ENCODE measurements at regions of chr5 and their contacts with region 1.

Region 1: DNA sequence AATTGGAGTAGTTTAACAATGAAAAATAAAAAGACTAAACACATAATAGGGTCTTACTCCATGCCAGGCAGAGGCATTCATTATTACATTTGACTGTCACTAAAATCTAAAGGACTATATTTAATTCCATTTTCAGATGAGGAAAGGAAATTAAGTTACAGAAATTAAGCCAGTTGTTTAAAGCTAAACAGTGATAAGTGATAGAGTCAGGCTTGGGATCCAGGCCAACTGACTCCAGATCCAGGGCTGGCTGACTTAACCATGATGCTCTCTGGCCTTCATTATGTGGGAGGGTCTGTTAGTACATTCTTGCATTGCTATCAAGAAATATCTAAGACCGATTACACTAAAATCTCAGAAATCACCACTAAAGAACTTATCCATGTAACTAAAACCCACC is 107.2 kb downstream of the ARHGEF28 start:
- DNase-seq: no peak
- H3K4me3 ChIP-seq: no peak overlapping the region
- H3K27ac ChIP-seq: no peak overlapping the region
- H3K4me1 ChIP-seq: no peaks in the 10 kb centered on the region
- H3K27me3 ChIP-seq: no peaks in the 10 kb centered on the region
- CTCF ChIP-seq: no peak
- EP300 ChIP-seq: no peak
- POLR2A ChIP-seq: no peak

Region 2: DNA sequence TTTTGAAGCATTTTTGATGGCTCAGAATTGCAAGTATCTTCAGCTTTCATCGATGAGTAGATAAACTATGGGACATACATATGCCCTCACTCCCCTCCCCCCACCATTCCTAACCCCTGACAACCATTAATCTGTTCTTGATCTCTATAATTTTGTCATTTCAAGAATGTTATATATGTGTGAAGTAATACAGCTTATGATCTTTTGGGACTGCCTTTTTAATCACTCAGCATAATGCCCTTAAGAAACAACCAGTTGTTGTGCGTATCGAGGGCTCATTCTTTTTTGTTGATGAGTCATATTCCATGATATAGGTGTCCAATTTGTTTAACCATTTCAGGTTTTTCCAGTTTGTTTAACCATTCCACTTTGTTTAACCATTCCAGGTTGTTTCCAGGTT is 31.7 kb before region 1 on chr5:
- in situ Hi-C with region 1: no loop called
- intact Hi-C with region 1: loop called (anchors 2 kb)
- DNase-seq: no peak
- H3K4me3 ChIP-seq: no peak overlapping the region
- H3K27ac ChIP-seq: no peak overlapping the region
- H3K4me1 ChIP-seq: no peaks in the 10 kb centered on the region
- H3K27me3 ChIP-seq: no peaks in the 10 kb centered on the region
- CTCF ChIP-seq: no peak
- EP300 ChIP-seq: no peak
- POLR2A ChIP-seq: no peak

Region 3: GRCh38 chr5:73719632-73720031 is 13.6 kb before region 1 on chr5:
- in situ Hi-C with region 1: no loop called
- intact Hi-C with region 1: no loop called
- DNase-seq: no peak
- H3K4me3 ChIP-seq: no peak overlapping the region
- H3K27ac ChIP-seq: no peak overlapping the region
- H3K4me1 ChIP-seq: no peaks in the 10 kb centered on the region
- H3K27me3 ChIP-seq: no peaks in the 10 kb centered on the region
- CTCF ChIP-seq: no peak
- EP300 ChIP-seq: no peak
- POLR2A ChIP-seq: no peak

Region 4: DNA sequence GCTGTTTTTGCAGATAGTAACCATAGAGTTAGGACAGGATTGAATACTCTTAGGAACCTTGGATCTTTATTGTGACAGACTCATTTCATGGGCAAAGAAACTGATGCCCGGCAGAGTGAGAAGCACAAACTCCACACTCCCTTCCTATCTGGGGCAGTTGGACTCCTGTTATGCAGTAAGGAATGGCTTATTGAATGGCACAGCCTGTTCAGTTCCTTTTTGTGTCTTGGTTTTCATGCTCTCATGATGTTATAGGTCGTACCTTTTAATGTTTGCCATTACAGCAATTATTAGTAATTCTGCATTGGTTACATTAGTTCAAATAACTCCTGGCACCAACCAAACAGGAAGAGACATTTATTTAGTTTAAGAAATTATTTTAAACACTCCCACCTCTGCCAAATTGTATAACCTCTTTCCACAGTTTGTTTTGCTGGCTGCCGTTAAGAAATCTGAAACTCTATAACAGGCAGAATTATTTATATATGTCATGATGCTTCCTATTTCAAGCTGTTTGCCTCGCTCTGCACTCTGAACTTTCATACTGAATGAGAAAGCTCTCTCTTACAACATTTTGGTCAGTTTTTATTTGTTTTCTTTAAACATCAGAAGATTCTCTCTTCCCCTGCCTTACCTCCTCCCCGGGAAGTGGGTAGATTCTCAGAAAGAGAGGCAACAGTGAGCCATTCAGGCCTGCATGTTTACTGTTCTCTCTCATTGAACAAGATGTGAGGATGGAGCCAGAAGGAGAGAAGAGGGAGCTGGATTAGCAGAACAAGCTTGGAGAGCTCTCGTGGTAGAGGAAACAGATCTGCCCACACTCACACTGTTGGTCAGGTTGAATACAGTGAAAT is 37.2 kb after region 1 on chr5:
- in situ Hi-C with region 1: no loop called
- intact Hi-C with region 1: no loop called
- DNase-seq: no peak
- H3K4me3 ChIP-seq: no peak overlapping the region
- H3K27ac ChIP-seq: no peak overlapping the region
- H3K4me1 ChIP-seq: no peaks in the 10 kb centered on the region
- H3K27me3 ChIP-seq: no peaks in the 10 kb centered on the region
- CTCF ChIP-seq: no peak
- EP300 ChIP-seq: no peak
- POLR2A ChIP-seq: no peak

Measured in transverse colon (tissue), 4 donors.